Psoas muscle (tissue), 8 donors: ENCODE measurements at regions of chr10 and their contacts with region 1.

Region 1: GRCh38 chr10:90751107-90751997 is 106.5 kb downstream of the HTR7 start:
- DNase-seq: no peak
- ATAC-seq: peak in 3 of 4 donors; percentile 47 to 68 (median 67)
- H3K4me3 ChIP-seq: no peak overlapping the region
- H3K27ac ChIP-seq: no peak overlapping the region
- H3K4me1 ChIP-seq: no peaks in the 10 kb centered on the region
- H3K27me3 ChIP-seq: peaks cover 0 to 5% (median 0%) of the 10 kb centered on the region in 3 donors
- CTCF ChIP-seq: peak; percentile 69

Region 2: DNA sequence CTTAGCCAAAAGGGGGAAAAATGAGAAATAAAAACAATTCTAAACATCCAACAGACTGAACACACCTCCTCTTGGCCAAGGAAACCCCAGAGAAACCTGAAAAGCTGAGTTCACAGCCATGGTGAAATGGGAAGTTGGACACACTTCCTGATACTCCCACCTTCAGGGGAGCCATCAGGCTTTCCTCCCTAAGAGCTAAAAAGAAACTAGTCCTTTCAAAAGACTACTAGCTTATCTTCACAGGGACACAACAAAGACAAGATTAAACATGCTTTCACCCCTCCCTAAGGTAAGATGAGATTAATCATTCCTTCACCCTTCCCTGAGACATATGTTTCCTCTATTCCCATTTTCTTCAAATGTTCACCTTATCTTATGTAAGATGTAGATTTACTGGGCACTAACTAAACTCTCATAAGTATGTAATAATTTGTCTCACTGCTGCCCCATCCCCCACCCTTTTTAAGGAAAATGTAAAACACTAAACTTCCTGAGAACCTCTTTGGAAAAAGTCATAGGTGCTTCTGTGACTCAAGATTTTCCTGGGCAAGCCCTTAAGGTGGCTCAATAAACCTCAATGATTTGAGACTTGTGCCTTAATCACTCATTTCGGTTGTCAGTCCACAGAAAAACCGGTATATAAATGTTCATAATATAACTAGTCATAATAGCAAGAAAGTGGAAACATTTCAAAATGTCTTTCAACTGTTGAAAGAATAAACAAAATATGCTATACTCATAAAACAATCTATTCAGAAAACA is 66.0 kb after region 1 on chr10:
- intact Hi-C with region 1: no loop called
- DNase-seq: no peak
- ATAC-seq: no peak
- H3K4me3 ChIP-seq: no peak overlapping the region
- H3K27ac ChIP-seq: no peak overlapping the region
- H3K4me1 ChIP-seq: no peaks in the 10 kb centered on the region
- H3K27me3 ChIP-seq: no peaks in the 10 kb centered on the region
- CTCF ChIP-seq: no peak

Region 3: DNA sequence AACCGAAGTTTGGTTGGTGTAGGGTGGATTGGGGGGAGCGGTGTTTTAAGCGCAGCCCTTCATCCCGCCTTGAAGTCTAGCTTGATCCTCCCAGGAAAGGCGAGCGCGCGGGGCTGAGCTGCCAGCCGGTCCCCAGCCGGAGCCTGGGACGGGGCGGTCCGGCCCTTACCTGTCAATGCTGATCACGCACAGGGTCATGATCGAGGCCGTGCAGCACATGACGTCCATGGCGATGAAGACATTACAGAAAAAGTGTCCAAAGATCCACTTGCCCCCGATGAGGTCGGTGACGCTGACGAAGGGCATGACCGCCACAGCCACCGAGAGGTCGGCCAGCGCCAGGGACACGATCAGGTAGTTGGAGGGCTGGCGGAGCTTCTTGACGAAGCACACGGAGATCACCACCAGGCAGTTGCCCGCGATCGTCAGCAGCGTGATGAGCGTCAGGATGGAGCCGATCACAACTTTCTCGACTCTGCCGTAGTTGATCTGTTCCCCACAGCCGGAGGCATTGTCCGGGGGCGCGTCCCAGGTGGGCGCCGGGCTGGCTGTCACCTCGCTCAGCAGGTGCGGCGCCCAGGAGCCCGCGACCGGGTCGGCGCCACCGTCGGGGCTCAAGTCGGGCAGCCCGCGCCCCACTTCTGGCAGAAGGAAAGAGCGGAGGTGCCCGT is 105.7 kb after region 1 on chr10:
- intact Hi-C with region 1: loop called in 1 of 2 experiments (anchors 1 kb)
- DNase-seq: peak in 1 of 2 donors; percentile 42
- ATAC-seq: peak; percentile 8 to 44 (median 9)
- H3K4me3 ChIP-seq: peak overlapping the region; percentile 69
- H3K27ac ChIP-seq: no peak overlapping the region
- H3K4me1 ChIP-seq: peaks cover 5% of the 10 kb centered on the region
- H3K27me3 ChIP-seq: peaks cover 0 to 39% (median 0%) of the 10 kb centered on the region in 3 donors
- CTCF ChIP-seq: no peak

Region 4: DNA sequence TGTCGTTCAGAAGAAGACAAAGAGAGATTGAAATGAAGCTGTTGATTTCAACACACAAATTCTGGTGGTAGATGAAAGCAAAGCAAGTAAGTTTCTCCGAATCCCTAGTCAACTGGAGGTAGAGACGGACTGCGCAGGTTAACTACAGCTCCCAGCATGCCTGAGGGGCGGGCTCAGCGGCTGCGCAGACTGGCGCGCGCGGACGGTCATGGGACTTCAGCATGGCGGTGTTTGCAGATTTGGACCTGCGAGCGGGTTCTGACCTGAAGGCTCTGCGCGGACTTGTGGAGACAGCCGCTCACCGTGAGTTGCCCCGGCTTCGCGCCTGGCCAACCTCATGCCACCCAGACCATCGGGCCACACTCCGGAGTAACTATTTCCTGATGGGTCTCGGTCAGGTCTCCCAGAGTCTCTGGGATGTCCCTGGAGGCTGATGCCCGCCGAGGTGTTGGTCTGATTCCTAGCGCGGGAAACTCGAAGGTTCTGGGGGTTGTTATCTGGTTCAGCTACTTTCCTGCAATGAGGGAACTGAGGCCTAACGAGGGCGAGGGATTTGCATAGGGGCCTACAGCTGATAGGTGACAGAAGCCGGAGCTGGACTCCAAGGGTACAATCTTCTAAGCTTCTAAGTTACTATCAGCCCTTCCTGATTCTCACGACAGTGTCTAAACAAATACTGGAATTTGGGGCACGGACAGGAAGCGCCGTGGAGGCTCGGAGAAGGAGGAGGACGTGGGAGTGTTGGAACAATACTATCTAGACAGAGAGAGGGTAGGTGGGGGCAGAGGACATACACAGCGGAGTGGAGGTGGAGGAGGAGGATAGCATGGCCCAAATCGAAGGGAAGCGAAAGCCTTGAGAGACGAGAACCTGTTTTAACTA is 120.7 kb after region 1 on chr10 and contains the start of gene RPP30:
- intact Hi-C with region 1: loop called (anchors 2 to 5 kb)
- DNase-seq: peak; percentile 86 to 90
- ATAC-seq: peak; percentile 97 to 100 (median 98)
- H3K4me3 ChIP-seq: peak within 1 kb of the TSS; percentile 87
- H3K27ac ChIP-seq: peak within 1 kb of the TSS; percentile 77
- H3K4me1 ChIP-seq: peaks cover 14% of the 10 kb centered on the region
- H3K27me3 ChIP-seq: no peaks in the 10 kb centered on the region
- CTCF ChIP-seq: no peak
- total RNA-seq, gene RPP30: 24.9 to 35.3 (median 29.6) TPM